ENCODE measurements at regions of chr1 and their contacts with region 1.

Region 1: DNA sequence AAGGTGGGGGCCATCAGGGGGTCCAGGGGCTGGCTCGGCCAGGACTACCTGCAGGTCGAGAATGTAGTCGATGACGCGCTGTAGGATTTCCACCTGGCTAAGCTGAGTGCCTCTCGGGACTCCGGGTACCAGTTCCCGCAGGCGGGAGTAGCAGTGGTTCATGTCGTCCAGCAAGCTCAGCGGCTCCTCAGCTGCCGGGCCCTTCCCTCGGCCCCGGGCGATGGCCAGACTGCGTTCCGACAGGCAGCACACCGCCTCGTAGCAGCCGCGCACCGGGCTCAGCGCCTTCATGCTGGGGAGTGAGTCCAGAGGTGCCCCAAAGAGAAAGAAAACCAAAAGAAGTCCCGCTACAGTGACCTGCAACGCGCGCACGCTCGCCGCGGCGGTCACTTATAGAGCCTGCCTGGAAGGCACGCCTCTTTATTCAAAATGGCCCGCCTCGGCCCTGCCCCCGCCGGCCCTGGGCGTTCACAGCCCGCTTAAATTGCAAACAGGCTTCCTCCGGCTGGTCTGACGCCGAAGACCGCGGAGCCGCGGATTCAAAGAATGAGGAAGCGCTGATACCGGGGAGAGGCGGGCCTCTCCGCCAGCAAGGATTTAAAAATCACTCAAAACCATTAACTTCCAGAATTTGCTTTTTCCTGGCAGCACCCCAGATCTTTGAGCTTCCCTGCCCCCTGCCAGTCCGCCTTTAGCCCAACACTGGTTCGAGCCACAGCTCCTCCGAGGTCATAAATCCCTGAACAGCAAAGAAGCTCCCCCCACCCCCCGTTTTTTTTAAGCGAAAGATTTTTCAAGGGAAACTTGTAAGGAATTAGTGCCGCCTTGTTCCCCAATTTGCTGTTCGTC is at the start of gene ID3:
- DNase-seq: peak; percentile 83 to 96 (median 91)
- ATAC-seq: peak; percentile 57
- H3K4me3 ChIP-seq: peak within 1 kb of the TSS; percentile 82 to 96
- H3K4me3 Mint-ChIP-seq: peak within 1 kb of the TSS; percentile 81
- H3K27ac ChIP-seq: peak within 1 kb of the TSS; percentile 50 to 83
- H3K27ac Mint-ChIP-seq: peak within 1 kb of the TSS; percentile 99
- H3K4me1 ChIP-seq: peaks cover 54% of the 10 kb centered on the region
- H3K4me1 Mint-ChIP-seq: peaks cover 61% of the 10 kb centered on the region
- H3K27me3 ChIP-seq: no peaks in the 10 kb centered on the region
- H3K27me3 Mint-ChIP-seq: no peaks in the 10 kb centered on the region
- CTCF ChIP-seq: no peak
- total RNA-seq, gene ID3: 44.2 to 48.1 TPM

Region 2: GRCh38 chr1:23026573-23026972 is 532.8 kb before region 1 on chr1:
- CTCF ChIA-PET with region 1: no interaction called
- POLR2A ChIA-PET with region 1: no interaction called
- intact Hi-C with region 1: no loop called
- DNase-seq: no peak
- ATAC-seq: no peak
- H3K4me3 ChIP-seq: no peak overlapping the region
- H3K4me3 Mint-ChIP-seq: no peak overlapping the region
- H3K27ac ChIP-seq: no peak overlapping the region
- H3K27ac Mint-ChIP-seq: no peak overlapping the region
- H3K4me1 ChIP-seq: peaks cover 14% of the 10 kb centered on the region
- H3K4me1 Mint-ChIP-seq: peaks cover 68% of the 10 kb centered on the region
- H3K27me3 ChIP-seq: no peaks in the 10 kb centered on the region
- H3K27me3 Mint-ChIP-seq: no peaks in the 10 kb centered on the region
- CTCF ChIP-seq: no peak

Region 3: GRCh38 chr1:23344111-23344986 is 215.0 kb before region 1 on chr1 and contains the start of gene HNRNPR:
- CTCF ChIA-PET with region 1: no interaction called
- POLR2A ChIA-PET with region 1: no interaction called
- intact Hi-C with region 1: loop called in 1 of 2 experiments (anchors 5 kb)
- DNase-seq: peak; percentile 97 to 100 (median 99)
- ATAC-seq: peak; percentile 96
- H3K4me3 ChIP-seq: peak within 1 kb of the TSS; percentile 70 to 93
- H3K4me3 Mint-ChIP-seq: peak within 1 kb of the TSS; percentile 94
- H3K27ac ChIP-seq: peak within 1 kb of the TSS; percentile 66 to 78
- H3K27ac Mint-ChIP-seq: peak within 1 kb of the TSS; percentile 96
- H3K4me1 ChIP-seq: peaks cover 31% of the 10 kb centered on the region
- H3K4me1 Mint-ChIP-seq: peaks cover 42% of the 10 kb centered on the region
- H3K27me3 ChIP-seq: no peaks in the 10 kb centered on the region
- H3K27me3 Mint-ChIP-seq: no peaks in the 10 kb centered on the region
- CTCF ChIP-seq: no peak
- total RNA-seq, gene HNRNPR: 102 to 103 TPM

Region 4: GRCh38 chr1:23530747-23531561 is 28.4 kb before region 1 on chr1 and contains the start of gene E2F2:
- CTCF ChIA-PET with region 1: no interaction called
- POLR2A ChIA-PET with region 1: interaction called, 5 read pairs
- intact Hi-C with region 1: loop called in 1 of 2 experiments (anchors 1 kb)
- DNase-seq: peak; percentile 56 to 91 (median 82)
- ATAC-seq: peak; percentile 71
- H3K4me3 ChIP-seq: peak within 1 kb of the TSS; percentile 42 to 52
- H3K4me3 Mint-ChIP-seq: peak within 1 kb of the TSS; percentile 85
- H3K27ac ChIP-seq: peak within 1 kb of the TSS in 1 of 2 experiments; percentile 72
- H3K27ac Mint-ChIP-seq: peak within 1 kb of the TSS; percentile 13
- H3K4me1 ChIP-seq: peaks cover 60% of the 10 kb centered on the region
- H3K4me1 Mint-ChIP-seq: peaks cover 63% of the 10 kb centered on the region
- H3K27me3 ChIP-seq: no peaks in the 10 kb centered on the region
- H3K27me3 Mint-ChIP-seq: no peaks in the 10 kb centered on the region
- CTCF ChIP-seq: no peak
- total RNA-seq, gene E2F2: 0.19 to 0.38 TPM

Region 5: GRCh38 chr1:23591460-23592208 is 32.3 kb after region 1 on chr1:
- CTCF ChIA-PET with region 1: interaction called, 5 read pairs
- POLR2A ChIA-PET with region 1: interaction called, 15 read pairs
- intact Hi-C with region 1: loop called in 1 of 2 experiments (anchors 2 kb)
- DNase-seq: peak in 5 of 9 experiments; percentile 34 to 63 (median 46)
- ATAC-seq: peak; percentile 82
- H3K4me3 ChIP-seq: no peak overlapping the region
- H3K4me3 Mint-ChIP-seq: peak overlapping the region; percentile 42
- H3K27ac ChIP-seq: peak overlapping the region in 1 of 2 experiments; percentile 41
- H3K27ac Mint-ChIP-seq: peak overlapping the region; percentile 83
- H3K4me1 ChIP-seq: peaks cover 62% of the 10 kb centered on the region
- H3K4me1 Mint-ChIP-seq: peaks cover 64% of the 10 kb centered on the region
- H3K27me3 ChIP-seq: no peaks in the 10 kb centered on the region
- H3K27me3 Mint-ChIP-seq: no peaks in the 10 kb centered on the region
- CTCF ChIP-seq: no peak

Region 6: GRCh38 chr1:23613191-23614031 is 54.1 kb after region 1 on chr1:
- CTCF ChIA-PET with region 1: interaction called, 44 read pairs
- POLR2A ChIA-PET with region 1: interaction called, 61 read pairs
- intact Hi-C with region 1: loop called in 1 of 2 experiments (anchors 2 kb)
- DNase-seq: peak in 7 of 9 experiments; percentile 33 to 78 (median 61)
- ATAC-seq: peak; percentile 61
- H3K4me3 ChIP-seq: peak overlapping the region in 1 of 2 experiments; percentile 8
- H3K4me3 Mint-ChIP-seq: peak overlapping the region; percentile 54
- H3K27ac ChIP-seq: peak overlapping the region; percentile 40 to 72
- H3K27ac Mint-ChIP-seq: peak overlapping the region; percentile 90
- H3K4me1 ChIP-seq: peaks cover 65% of the 10 kb centered on the region
- H3K4me1 Mint-ChIP-seq: peaks cover 83% of the 10 kb centered on the region
- H3K27me3 ChIP-seq: no peaks in the 10 kb centered on the region
- H3K27me3 Mint-ChIP-seq: no peaks in the 10 kb centered on the region
- CTCF ChIP-seq: no peak

Region 7: GRCh38 chr1:23627069-23627735 is 67.8 kb after region 1 on chr1:
- CTCF ChIA-PET with region 1: interaction called, 1,167 read pairs
- POLR2A ChIA-PET with region 1: interaction called, 53 read pairs
- intact Hi-C with region 1: no loop called
- DNase-seq: peak in 5 of 9 experiments; percentile 29 to 63 (median 40)
- ATAC-seq: peak; percentile 69
- H3K4me3 ChIP-seq: peak overlapping the region; percentile 21 to 58
- H3K4me3 Mint-ChIP-seq: peak overlapping the region; percentile 84
- H3K27ac ChIP-seq: peak overlapping the region in 1 of 2 experiments; percentile 53
- H3K27ac Mint-ChIP-seq: peak overlapping the region; percentile 91
- H3K4me1 ChIP-seq: peaks cover 56% of the 10 kb centered on the region
- H3K4me1 Mint-ChIP-seq: peaks cover 64% of the 10 kb centered on the region
- H3K27me3 ChIP-seq: no peaks in the 10 kb centered on the region
- H3K27me3 Mint-ChIP-seq: no peaks in the 10 kb centered on the region
- CTCF ChIP-seq: no peak

Region 8: GRCh38 chr1:23673086-23673813 is 113.9 kb after region 1 on chr1:
- CTCF ChIA-PET with region 1: no interaction called
- POLR2A ChIA-PET with region 1: no interaction called
- intact Hi-C with region 1: no loop called
- DNase-seq: peak in 1 of 9 experiments; percentile 20
- ATAC-seq: no peak
- H3K4me3 ChIP-seq: no peak overlapping the region
- H3K4me3 Mint-ChIP-seq: no peak overlapping the region
- H3K27ac ChIP-seq: no peak overlapping the region
- H3K27ac Mint-ChIP-seq: no peak overlapping the region
- H3K4me1 ChIP-seq: no peaks in the 10 kb centered on the region
- H3K4me1 Mint-ChIP-seq: no peaks in the 10 kb centered on the region
- H3K27me3 ChIP-seq: no peaks in the 10 kb centered on the region
- H3K27me3 Mint-ChIP-seq: peaks cover 6% of the 10 kb centered on the region
- CTCF ChIP-seq: no peak

Region 9: DNA sequence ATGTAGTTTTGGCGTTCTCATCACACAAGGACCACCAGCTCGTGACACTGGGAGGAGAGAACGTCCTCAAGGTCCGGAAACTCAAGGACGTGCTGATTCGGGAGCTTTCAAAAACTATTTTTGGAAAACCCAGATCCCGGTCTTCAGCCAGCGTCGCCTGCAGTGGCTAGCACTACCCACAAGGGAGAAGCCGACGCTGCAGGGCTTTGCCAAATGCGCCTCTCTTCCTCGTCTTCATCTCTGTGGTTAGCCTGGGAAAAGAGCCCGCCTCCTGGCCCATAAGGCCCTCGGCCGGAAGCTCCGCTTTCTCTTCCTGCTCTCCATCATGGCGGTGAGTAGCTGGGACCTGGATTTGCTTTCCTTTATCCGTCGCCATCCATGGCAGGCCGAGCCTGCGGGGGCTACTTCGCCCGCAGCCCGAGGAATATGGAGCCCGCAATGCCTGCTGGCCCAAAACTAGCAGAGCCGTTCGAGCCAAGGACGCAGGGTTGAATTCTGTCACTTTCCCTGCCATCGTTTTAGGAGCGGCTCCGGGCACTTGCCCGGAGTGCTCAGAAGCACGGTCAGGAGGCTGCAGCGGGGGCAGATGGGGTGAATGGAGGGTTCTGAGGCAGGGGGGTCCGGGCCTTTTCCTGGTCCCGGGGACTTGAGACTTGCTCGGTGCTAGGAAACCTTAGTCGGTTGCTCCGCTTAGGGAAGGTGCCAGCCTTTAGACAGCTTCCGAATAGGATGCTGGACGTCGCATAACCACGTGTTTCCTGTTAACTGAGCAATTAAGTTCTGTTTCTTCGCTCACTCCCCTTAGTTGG is 132.3 kb after region 1 on chr1 and contains the start of gene RPL11:
- CTCF ChIA-PET with region 1: interaction called, 3 read pairs
- POLR2A ChIA-PET with region 1: interaction called, 4 read pairs
- intact Hi-C with region 1: loop called in 1 of 2 experiments (anchors 5 kb)
- DNase-seq: peak; percentile 73 to 95 (median 88)
- ATAC-seq: peak; percentile 99
- H3K4me3 ChIP-seq: peak within 1 kb of the TSS; percentile 68 to 84
- H3K4me3 Mint-ChIP-seq: peak within 1 kb of the TSS; percentile 96
- H3K27ac ChIP-seq: peak within 1 kb of the TSS; percentile 74 to 87
- H3K27ac Mint-ChIP-seq: peak within 1 kb of the TSS; percentile 97
- H3K4me1 ChIP-seq: peaks cover 41% of the 10 kb centered on the region
- H3K4me1 Mint-ChIP-seq: peaks cover 46% of the 10 kb centered on the region
- H3K27me3 ChIP-seq: no peaks in the 10 kb centered on the region
- H3K27me3 Mint-ChIP-seq: no peaks in the 10 kb centered on the region
- CTCF ChIP-seq: peak; percentile 77
- total RNA-seq, gene RPL11: 2,153 to 2,178 TPM